Activated B cell treated with CpG ODN at 0.5 μM for 24 hours (primary cell): ENCODE measurements at regions of chr14 and their contacts with region 1.

Region 1: GRCh38 chr14:95424529-95424928 is 91.9 kb downstream of the SYNE3 start:
- DNase-seq: no peak
- ATAC-seq: no peak
- H3K4me3 Mint-ChIP-seq: no peak overlapping the region
- H3K27ac Mint-ChIP-seq: no peak overlapping the region
- H3K4me1 Mint-ChIP-seq: peaks cover 3% of the 10 kb centered on the region
- H3K27me3 Mint-ChIP-seq: no peaks in the 10 kb centered on the region
- CTCF ChIP-seq: no peak

Region 2: DNA sequence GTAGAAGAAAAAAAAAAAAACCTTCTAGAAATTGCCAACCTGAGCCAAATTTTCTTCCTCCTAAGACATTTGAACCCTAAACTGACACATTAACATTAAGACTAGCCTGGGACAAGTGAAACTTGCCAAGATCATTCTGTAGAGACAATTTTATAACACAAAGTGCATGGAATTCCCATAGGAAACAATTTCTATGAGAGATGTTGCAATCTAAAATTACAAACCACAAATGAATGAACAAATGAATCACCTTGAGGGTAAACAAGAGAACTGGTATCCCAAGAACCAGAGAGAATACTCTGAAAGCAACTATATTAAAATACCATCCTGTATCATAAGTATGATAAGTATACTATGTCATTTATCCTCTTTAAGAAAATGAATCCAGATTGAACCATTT is 432.5 kb before region 1 on chr14:
- CTCF ChIA-PET with region 1: no interaction called
- POLR2A ChIA-PET with region 1: no interaction called
- intact Hi-C with region 1: no loop called
- DNase-seq: no peak
- ATAC-seq: no peak
- H3K4me3 Mint-ChIP-seq: no peak overlapping the region
- H3K27ac Mint-ChIP-seq: no peak overlapping the region
- H3K4me1 Mint-ChIP-seq: no peaks in the 10 kb centered on the region
- H3K27me3 Mint-ChIP-seq: peaks cover 21% of the 10 kb centered on the region
- CTCF ChIP-seq: no peak

Region 3: GRCh38 chr14:95361373-95362137 is 63.0 kb before region 1 on chr14:
- CTCF ChIA-PET with region 1: no interaction called
- POLR2A ChIA-PET with region 1: no interaction called
- intact Hi-C with region 1: no loop called
- DNase-seq: peak; percentile 50
- ATAC-seq: peak; percentile 84
- H3K4me3 Mint-ChIP-seq: peak overlapping the region; percentile 15
- H3K27ac Mint-ChIP-seq: no peak overlapping the region
- H3K4me1 Mint-ChIP-seq: peaks cover 10% of the 10 kb centered on the region
- H3K27me3 Mint-ChIP-seq: peaks cover 50% of the 10 kb centered on the region
- CTCF ChIP-seq: no peak

Region 4: DNA sequence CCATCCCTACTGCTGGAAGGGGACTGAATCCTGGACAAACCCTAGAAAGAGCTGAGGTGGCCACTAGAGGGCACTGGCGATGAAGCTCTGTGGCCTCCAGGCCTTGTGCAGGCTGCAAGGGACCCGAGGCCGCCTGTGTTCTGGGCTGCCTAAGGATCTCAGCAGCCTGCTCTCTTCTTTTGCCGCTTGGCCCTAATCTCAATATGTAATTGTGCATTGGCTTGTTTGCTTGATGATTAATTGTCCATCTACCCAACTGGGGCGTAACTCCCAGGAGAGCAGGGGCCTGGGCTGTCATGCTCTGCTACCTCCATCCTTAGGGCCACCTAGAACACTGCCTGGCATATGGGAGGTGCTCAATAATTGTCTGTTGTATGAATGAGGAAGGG is 18.1 kb after region 1 on chr14:
- CTCF ChIA-PET with region 1: interaction called, 12 read pairs
- POLR2A ChIA-PET with region 1: interaction called, 3 read pairs
- intact Hi-C with region 1: no loop called
- DNase-seq: peak; percentile 55
- ATAC-seq: peak; percentile 91
- H3K4me3 Mint-ChIP-seq: no peak overlapping the region
- H3K27ac Mint-ChIP-seq: peak overlapping the region; percentile 78
- H3K4me1 Mint-ChIP-seq: peaks cover 34% of the 10 kb centered on the region
- H3K27me3 Mint-ChIP-seq: no peaks in the 10 kb centered on the region
- CTCF ChIP-seq: no peak